Sigmoid colon (tissue), 7 donors: ENCODE measurements at regions of chr14 and their contacts with region 1.

Region 1: DNA sequence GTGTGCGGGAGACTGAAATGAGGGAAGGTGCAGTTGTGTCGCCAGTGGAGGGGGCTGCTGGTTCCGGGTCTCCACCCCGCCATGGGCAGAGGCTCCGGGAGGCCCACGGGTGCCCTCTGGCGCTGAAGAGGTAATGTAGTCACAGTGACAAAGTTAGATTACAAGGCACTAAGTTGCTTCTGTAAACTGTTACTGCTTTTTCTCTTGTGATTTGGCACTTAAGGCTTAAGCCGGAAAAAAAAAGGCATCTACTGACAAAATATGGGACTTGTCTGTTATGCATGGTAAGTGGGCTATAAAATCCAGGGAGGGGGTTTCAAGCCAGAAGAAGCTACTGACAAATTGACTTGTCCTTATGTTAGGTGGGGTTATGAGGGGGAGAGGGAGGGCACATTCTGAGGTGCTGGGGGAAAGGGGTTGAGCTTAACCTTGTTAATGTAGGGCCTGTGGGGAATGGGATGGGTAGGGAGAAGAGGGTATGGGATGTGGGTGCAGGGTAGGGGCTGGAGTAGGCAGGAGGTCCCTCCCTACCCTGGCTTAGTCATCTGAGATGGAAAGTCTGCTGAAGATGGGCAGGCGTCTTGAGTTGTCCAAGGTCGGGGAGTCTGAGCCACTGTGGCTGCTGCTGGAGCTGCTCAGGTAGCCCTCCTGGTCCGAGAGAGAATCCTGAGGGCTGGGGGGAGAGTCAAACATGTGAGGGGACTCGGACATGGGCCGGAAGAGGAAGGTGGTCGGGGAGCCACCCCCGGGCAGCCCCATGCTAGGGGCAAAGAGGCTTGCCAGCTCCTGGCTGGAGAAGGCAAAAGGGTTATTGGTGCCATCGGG is 3.7 kb downstream of the ZFP36L1 start:
- DNase-seq: peak; percentile 95
- H3K4me3 ChIP-seq: peak overlapping the region; percentile 76 to 88 (median 80)
- H3K27ac ChIP-seq: peak overlapping the region; percentile 98 to 100 (median 99)
- H3K4me1 ChIP-seq: peaks cover 0 to 28% (median 24%) of the 10 kb centered on the region in 4 donors
- H3K27me3 ChIP-seq: no peaks in the 10 kb centered on the region
- CTCF ChIP-seq: peak in 3 of 4 experiments; percentile 50 to 67 (median 56)
- EP300 ChIP-seq: peak in 1 of 4 donors; percentile 3
- POLR2A ChIP-seq: no peak

Region 2: DNA sequence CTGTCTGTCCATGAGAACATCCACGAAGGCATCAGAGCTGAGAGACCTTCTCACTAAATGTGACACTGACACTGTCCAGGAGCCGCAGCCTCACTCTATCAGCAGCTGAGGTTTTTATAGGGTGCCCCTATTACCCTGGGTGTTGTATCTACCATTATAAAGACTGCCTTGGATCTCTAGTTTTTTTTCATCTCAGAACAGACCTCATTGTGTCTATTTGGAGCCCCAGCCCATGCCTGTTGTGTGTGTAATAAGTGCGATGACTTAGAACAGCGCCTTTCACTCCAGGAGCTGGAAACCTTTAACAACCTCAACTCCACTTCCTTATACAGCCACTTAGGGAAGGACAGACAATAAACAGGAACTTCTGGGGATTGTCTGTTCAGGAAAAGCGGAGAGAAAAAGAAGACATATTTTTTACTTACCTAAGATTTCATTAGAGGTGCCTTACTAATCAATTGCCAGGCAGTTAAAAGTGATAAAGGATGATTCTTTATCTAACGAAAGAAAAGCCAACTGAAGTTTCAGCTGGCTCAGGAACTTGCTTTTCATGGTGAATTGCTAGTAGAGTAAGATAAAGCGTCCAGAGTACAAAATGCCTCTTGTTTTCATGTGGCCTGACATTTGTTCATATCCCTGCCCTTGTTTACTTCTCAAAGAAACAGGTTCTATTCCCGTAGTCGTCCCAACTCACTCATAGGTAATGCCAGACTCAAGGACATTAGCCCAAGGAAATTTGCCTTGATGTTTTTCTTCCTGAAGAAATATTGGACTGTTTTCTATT is 549.0 kb before region 1 on chr14:
- intact Hi-C with region 1: loop called (anchors 2 kb)
- DNase-seq: peak; percentile 88
- H3K4me3 ChIP-seq: no peak overlapping the region
- H3K27ac ChIP-seq: peak overlapping the region; percentile 5 to 90 (median 85)
- H3K4me1 ChIP-seq: peaks cover 0 to 87% (median 75%) of the 10 kb centered on the region in 4 donors
- H3K27me3 ChIP-seq: no peaks in the 10 kb centered on the region
- CTCF ChIP-seq: no peak
- EP300 ChIP-seq: peak; percentile 43 to 87 (median 48)
- POLR2A ChIP-seq: no peak

Region 3: GRCh38 chr14:68359837-68360552 is 429.2 kb before region 1 on chr14:
- intact Hi-C with region 1: no loop called
- DNase-seq: peak; percentile 78
- H3K4me3 ChIP-seq: no peak overlapping the region
- H3K27ac ChIP-seq: peak overlapping the region; percentile 65 to 81 (median 68)
- H3K4me1 ChIP-seq: peaks cover 0 to 40% (median 34%) of the 10 kb centered on the region in 4 donors
- H3K27me3 ChIP-seq: no peaks in the 10 kb centered on the region
- CTCF ChIP-seq: no peak
- EP300 ChIP-seq: no peak
- POLR2A ChIP-seq: no peak

Region 4: GRCh38 chr14:68665131-68665530 is 124.1 kb before region 1 on chr14:
- intact Hi-C with region 1: no loop called
- DNase-seq: no peak
- H3K4me3 ChIP-seq: no peak overlapping the region
- H3K27ac ChIP-seq: peak overlapping the region; percentile 70 to 88 (median 81)
- H3K4me1 ChIP-seq: peaks cover 0 to 86% (median 74%) of the 10 kb centered on the region in 4 donors
- H3K27me3 ChIP-seq: no peaks in the 10 kb centered on the region
- CTCF ChIP-seq: no peak
- EP300 ChIP-seq: no peak
- POLR2A ChIP-seq: no peak

Region 5: GRCh38 chr14:68862954-68863594 is 73.9 kb after region 1 on chr14:
- intact Hi-C with region 1: no loop called
- DNase-seq: peak; percentile 88
- H3K4me3 ChIP-seq: no peak overlapping the region
- H3K27ac ChIP-seq: peak overlapping the region in 1 of 4 donors; percentile 37
- H3K4me1 ChIP-seq: no peaks in the 10 kb centered on the region
- H3K27me3 ChIP-seq: no peaks in the 10 kb centered on the region
- CTCF ChIP-seq: peak; percentile 54 to 74 (median 70)
- EP300 ChIP-seq: no peak
- POLR2A ChIP-seq: no peak